ENCODE measurements at regions of chr13 and their contacts with region 1.

Region 1: DNA sequence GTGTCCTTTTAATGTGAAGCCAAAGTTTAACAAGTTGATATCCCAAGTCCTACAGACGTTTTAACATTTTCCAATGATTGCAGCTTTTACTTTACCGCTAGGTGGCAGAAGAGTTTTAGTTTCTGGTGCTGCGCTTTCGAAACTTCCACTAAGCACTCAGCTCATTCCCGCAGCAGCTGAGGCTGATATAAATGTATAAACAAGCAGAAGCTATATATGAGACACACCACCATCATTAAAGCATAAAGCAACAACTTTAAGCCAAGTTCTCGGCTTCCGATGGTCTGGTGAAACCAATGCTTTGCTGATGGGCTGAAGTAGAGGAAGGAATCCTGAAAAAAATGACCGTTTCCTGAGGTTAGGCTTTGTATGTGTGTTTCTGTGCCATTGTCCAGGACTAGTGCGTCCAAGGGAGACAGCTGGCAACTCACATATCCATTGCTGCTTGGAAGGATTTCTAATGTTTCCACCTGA is 753.9 kb downstream of the OLFM4 start:
- DNase-seq: peak in 7 of 10 donors; percentile 16 to 82 (median 38)

Region 2: DNA sequence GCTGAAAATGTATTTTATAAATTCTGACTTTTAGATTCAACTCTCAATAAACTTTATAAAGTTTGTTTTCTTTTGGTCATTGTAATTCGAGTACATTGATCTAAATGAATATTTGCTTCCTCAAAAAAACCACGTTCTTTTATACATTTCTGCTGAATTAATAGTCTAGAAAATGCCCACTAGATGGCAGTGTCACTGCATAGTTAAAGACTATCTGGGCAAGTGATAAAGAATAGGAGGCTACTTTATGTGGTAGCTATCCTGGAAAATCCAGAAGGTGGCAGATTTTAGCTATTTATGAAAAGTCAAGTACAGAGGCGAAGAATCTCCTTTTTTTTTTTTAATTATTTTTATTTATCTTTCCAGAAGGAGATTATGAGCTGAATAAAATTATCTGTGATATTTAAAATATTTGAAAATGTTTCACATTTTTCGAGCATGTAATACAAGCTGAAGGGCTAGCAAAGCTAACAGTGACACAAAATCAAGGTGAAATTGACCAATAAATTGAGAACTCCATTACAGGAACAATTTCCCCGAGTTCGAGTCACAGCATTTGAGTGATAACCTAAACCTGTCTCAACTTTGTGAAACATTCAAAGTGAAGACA is 532.2 kb before region 1 on chr13:
- intact Hi-C with region 1: loop called (anchors 10 kb)
- DNase-seq: peak in 1 of 10 donors; percentile 12

Region 3: DNA sequence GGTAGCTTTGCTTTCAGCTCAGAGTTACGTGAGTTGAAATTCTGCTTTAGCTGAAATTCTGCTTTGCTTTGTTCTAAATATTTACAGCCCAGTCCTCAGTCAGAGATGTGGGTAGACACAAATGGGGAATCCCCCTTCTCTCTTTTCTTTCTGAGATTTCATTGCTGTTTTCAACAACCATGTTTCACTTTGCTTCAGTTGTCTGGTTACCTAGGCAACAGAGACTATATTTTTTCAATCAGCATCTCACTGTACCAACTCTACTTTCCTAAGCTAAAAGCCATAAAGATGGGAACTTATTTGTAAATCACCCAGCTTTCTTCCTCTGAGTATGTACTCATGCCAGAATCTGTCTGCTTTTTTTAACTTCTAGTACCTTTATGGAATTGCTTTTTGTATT is 244.9 kb before region 1 on chr13:
- intact Hi-C with region 1: no loop called
- DNase-seq: no peak

Region 4: GRCh38 chr13:54536112-54536511 is 753.6 kb after region 1 on chr13:
- intact Hi-C with region 1: loop called (anchors 2 kb)
- DNase-seq: no peak